ENCODE measurements at regions of chr19 and their contacts with region 1.

Region 1: GRCh38 chr19:10269333-10270179 is 1.4 kb upstream of the ICAM1 start:
- DNase-seq: peak; percentile 97
- H3K4me3 Mint-ChIP-seq: peak overlapping the region; percentile 96
- H3K27ac Mint-ChIP-seq: peak overlapping the region; percentile 96
- H3K4me1 Mint-ChIP-seq: peaks cover 28% of the 10 kb centered on the region
- H3K27me3 Mint-ChIP-seq: no peaks in the 10 kb centered on the region

Region 2: DNA sequence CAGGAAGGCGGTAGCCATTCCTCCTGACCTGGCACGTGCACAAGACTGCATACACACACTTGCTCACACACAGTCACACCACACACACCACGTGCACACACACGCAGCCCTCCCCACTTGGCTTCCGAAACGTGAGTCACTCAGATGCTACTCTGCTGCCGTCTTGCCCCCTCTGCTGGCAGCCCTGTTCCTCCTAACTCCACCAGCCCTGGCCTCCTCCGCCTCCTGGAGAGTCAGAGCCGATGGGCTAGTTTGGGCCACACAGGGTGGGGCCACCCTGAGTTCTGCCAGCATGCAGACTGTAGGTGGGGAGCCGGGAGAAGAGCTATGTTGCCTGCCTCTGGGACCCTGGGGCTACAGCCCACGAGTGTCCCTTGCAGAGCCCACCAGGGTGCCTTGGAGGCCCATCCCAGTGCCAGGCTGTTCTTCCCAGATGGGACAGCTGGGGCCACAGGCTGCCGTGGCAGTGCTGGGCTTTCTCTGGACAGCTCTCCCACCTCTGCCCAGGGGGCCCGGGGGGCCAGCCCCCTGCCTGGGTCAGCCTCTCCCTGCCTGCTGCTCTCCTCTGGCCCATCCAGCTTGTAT is 422.4 kb before region 1 on chr19:
- intact Hi-C with region 1: no loop called
- DNase-seq: peak; percentile 75
- H3K4me3 Mint-ChIP-seq: no peak overlapping the region
- H3K27ac Mint-ChIP-seq: peak overlapping the region; percentile 54
- H3K4me1 Mint-ChIP-seq: peaks cover 9% of the 10 kb centered on the region
- H3K27me3 Mint-ChIP-seq: no peaks in the 10 kb centered on the region

Region 3: GRCh38 chr19:10195290-10195539 is 74.3 kb before region 1 on chr19:
- intact Hi-C with region 1: no loop called
- DNase-seq: no peak
- H3K4me3 Mint-ChIP-seq: peak overlapping the region; percentile 93
- H3K27ac Mint-ChIP-seq: peak overlapping the region; percentile 97
- H3K4me1 Mint-ChIP-seq: peaks cover 32% of the 10 kb centered on the region
- H3K27me3 Mint-ChIP-seq: no peaks in the 10 kb centered on the region

Region 4: DNA sequence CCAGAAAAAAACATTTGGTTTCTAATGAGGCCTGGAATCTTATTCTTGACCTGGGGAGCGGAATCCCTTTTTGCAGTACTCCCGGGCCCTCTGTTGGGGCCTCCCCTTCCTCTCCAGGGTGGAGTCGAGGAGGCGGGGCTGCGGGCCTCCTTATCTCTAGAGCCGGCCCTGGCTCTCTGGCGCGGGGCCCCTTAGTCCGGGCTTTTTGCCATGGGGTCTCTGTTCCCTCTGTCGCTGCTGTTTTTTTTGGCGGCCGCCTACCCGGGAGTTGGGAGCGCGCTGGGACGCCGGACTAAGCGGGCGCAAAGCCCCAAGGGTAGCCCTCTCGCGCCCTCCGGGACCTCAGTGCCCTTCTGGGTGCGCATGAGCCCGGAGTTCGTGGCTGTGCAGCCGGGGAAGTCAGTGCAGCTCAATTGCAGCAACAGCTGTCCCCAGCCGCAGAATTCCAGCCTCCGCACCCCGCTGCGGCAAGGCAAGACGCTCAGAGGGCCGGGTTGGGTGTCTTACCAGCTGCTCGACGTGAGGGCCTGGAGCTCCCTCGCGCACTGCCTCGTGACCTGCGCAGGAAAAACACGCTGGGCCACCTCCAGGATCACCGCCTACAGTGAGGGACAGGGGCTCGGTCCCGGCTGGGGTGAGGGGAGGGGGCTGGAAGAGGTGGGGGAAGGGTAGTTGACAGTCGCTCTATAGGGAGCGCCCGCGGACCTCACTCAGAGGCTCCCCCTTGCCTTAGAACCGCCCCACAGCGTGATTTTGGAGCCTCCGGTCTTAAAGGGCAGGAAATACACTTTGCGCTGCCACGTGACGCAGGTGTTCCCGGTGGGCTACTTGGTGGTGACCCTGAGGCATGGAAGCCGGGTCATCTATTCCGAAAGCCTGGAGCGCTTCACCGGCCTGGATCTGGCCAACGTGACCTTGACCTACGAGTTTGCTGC is 17.5 kb after region 1 on chr19 and contains the start of gene ICAM4:
- intact Hi-C with region 1: loop called (anchors 1 kb)
- DNase-seq: peak; percentile 88
- H3K4me3 Mint-ChIP-seq: peak within 1 kb of the TSS; percentile 67
- H3K27ac Mint-ChIP-seq: peak within 1 kb of the TSS; percentile 26
- H3K4me1 Mint-ChIP-seq: peaks cover 59% of the 10 kb centered on the region
- H3K27me3 Mint-ChIP-seq: peaks cover 30% of the 10 kb centered on the region
- total RNA-seq, gene ICAM4: 0.71 and 0.79 TPM in 2 replicates

Region 5: GRCh38 chr19:10315335-10316214 is 46.0 kb after region 1 on chr19 and contains the start of gene FDX2:
- intact Hi-C with region 1: loop called (anchors 5 kb)
- DNase-seq: peak; percentile 97
- H3K4me3 Mint-ChIP-seq: peak within 1 kb of the TSS; percentile 86
- H3K27ac Mint-ChIP-seq: peak within 1 kb of the TSS; percentile 83
- H3K4me1 Mint-ChIP-seq: peaks cover 14% of the 10 kb centered on the region
- H3K27me3 Mint-ChIP-seq: no peaks in the 10 kb centered on the region
- total RNA-seq, gene FDX2: 23.9 and 24.9 TPM in 2 replicates

Region 6: GRCh38 chr19:10380313-10381102 is 111.0 kb after region 1 on chr19 and contains the start of gene TYK2:
- intact Hi-C with region 1: loop called (anchors 2 kb)
- DNase-seq: peak; percentile 99
- H3K4me3 Mint-ChIP-seq: peak within 1 kb of the TSS; percentile 92
- H3K27ac Mint-ChIP-seq: peak within 1 kb of the TSS; percentile 91
- H3K4me1 Mint-ChIP-seq: peaks cover 20% of the 10 kb centered on the region
- H3K27me3 Mint-ChIP-seq: peaks cover 1% of the 10 kb centered on the region
- total RNA-seq, gene TYK2: 244 and 255 TPM in 2 replicates

Measured in activated CD4-positive, alpha-beta T cell treated with anti-CD3 and anti-CD28 coated beads, Interleukin-2, amount 10 ng/mL, durations not matched to agents 24 days and 14 days (primary cell).